Posterior cingulate gyrus (tissue), 11 donors: ENCODE measurements at regions of chrX and their contacts with region 1.

Region 1: GRCh38 chrX:3638280-3638873 is 75.1 kb downstream of the PRKX start:
- DNase-seq: peak in 5 of 10 donors; percentile 18 to 48 (median 42)

Region 2: DNA sequence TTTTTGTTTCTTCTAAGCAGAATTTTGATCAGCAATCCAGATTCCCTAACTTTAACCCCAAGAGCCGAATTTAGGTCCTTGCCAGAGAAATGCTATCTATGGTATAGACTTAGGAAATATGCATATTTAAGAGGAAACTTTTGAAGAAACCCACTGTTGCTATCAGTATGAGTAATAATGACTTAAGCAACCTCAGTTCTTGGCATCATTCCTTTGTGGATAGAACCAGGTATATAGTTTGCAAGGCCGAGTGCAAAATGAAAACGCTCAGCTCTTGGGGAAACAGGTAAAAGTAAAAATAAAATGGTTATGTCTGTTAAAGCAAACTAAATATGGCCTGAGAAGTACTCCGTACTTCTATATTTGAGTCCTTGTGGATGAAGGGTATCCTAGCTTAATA is 519.0 kb before region 1 on chrX:
- intact Hi-C with region 1: loop called (anchors 5 kb)
- DNase-seq: no peak

Region 3: DNA sequence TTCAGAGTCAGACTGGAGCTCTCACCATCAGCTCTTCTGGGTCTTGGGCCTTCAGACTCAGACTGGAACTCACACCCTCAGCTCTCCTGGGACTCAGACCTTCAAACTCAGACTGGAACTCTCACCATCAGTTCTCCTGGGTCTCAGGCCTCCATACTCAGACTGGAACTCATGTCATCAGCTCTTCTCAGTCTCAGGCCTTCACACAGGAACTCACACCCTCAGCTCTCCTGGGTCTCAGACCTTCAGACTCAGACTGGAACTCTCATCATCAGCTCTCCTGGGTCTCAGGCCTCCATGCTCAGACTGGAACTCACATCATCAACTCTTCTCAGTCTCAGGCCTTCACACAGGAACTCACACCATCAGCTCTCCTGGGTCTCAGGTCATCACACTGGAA is 144.8 kb before region 1 on chrX:
- intact Hi-C with region 1: no loop called
- DNase-seq: no peak

Region 4: DNA sequence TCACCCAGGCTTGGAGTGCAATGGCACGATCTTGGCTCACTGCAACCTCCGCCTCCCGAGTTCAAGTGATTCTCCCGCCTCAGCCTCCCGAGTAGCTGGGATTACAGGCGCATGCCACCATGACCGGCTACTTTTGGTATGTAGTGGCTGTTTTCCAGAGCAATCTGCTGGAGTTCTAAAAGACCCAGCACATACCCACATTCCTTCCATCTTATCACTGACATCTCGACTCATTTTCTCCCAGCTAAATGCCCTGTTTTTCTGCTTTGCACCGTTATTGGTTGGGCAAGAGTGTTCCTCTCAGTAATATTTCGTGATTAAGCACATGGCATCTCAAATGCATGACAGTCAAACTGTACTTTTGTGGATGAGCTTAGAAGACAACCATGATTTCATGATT is 21.4 kb after region 1 on chrX:
- intact Hi-C with region 1: no loop called
- DNase-seq: no peak